ENCODE measurements at regions of chr4 and their contacts with region 1.

Region 1: GRCh38 chr4:57426779-57427395 is 316.7 kb upstream of the IGFBP7 start:
- DNase-seq: no peak
- ATAC-seq: peak; percentile 96
- H3K4me3 ChIP-seq: no peak overlapping the region
- H3K27ac ChIP-seq: no peak overlapping the region
- H3K4me1 ChIP-seq: no peaks in the 10 kb centered on the region
- H3K27me3 ChIP-seq: no peaks in the 10 kb centered on the region
- CTCF ChIP-seq: peak; percentile 74 to 85 (median 74)
- EP300 ChIP-seq: no peak
- POLR2A ChIP-seq: no peak
- RAD21 ChIP-seq: peak; percentile 77

Region 2: GRCh38 chr4:57102050-57102624 is 324.8 kb before region 1 on chr4:
- CTCF ChIA-PET with region 1: no interaction called
- POLR2A ChIA-PET with region 1: no interaction called
- RAD21 ChIA-PET with region 1: no interaction called
- SMC1A ChIA-PET with region 1: no interaction called
- in situ Hi-C with region 1: no loop called
- intact Hi-C with region 1: no loop called
- DNase-seq: no peak
- ATAC-seq: no peak
- H3K4me3 ChIP-seq: no peak overlapping the region
- H3K27ac ChIP-seq: no peak overlapping the region
- H3K4me1 ChIP-seq: no peaks in the 10 kb centered on the region
- H3K27me3 ChIP-seq: peaks cover 0 to 5% of the 10 kb centered on the region in 2 experiments; a peak in 3 of 4 replicates
- CTCF ChIP-seq: no peak
- EP300 ChIP-seq: no peak
- POLR2A ChIP-seq: no peak
- RAD21 ChIP-seq: no peak

Region 3: GRCh38 chr4:57342411-57342810 is 84.5 kb before region 1 on chr4:
- CTCF ChIA-PET with region 1: no interaction called
- POLR2A ChIA-PET with region 1: no interaction called
- RAD21 ChIA-PET with region 1: no interaction called
- SMC1A ChIA-PET with region 1: no interaction called
- in situ Hi-C with region 1: no loop called
- intact Hi-C with region 1: no loop called
- DNase-seq: no peak
- ATAC-seq: no peak
- H3K4me3 ChIP-seq: no peak overlapping the region
- H3K27ac ChIP-seq: no peak overlapping the region
- H3K4me1 ChIP-seq: no peaks in the 10 kb centered on the region
- H3K27me3 ChIP-seq: no peaks in the 10 kb centered on the region
- CTCF ChIP-seq: no peak
- EP300 ChIP-seq: no peak
- POLR2A ChIP-seq: no peak
- RAD21 ChIP-seq: no peak

Region 4: DNA sequence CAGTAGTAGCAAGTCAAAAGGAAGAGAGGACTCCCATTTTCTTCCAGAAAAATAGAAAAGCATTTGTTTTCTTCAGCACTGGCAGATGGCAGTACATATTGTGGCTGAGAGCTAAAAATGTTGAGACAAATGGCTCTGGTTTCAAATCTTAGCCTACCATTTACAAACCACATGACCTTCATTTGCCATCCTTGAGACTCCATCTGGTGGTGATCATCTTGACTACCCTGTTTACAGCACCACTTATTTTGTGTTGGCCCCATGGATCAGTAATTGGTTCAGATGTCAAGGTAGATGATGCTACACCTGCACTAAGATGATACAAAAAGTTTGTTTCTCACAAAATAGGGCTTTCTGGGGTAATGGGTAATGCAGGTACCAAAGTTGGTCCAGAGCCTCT is 635.1 kb after region 1 on chr4:
- CTCF ChIA-PET with region 1: no interaction called
- POLR2A ChIA-PET with region 1: no interaction called
- RAD21 ChIA-PET with region 1: no interaction called
- SMC1A ChIA-PET with region 1: interaction called, 4 read pairs
- in situ Hi-C with region 1: no loop called
- intact Hi-C with region 1: loop called (anchors 2 kb)
- DNase-seq: no peak
- ATAC-seq: no peak
- H3K4me3 ChIP-seq: no peak overlapping the region
- H3K27ac ChIP-seq: no peak overlapping the region
- H3K4me1 ChIP-seq: no peaks in the 10 kb centered on the region
- H3K27me3 ChIP-seq: no peaks in the 10 kb centered on the region
- CTCF ChIP-seq: peak in 1 of 3 experiments; percentile 21; a peak in 1 of 6 replicates
- EP300 ChIP-seq: no peak
- POLR2A ChIP-seq: no peak
- RAD21 ChIP-seq: no peak

Measured in GM12878 (cell line).